ENCODE measurements at regions of chr22 and their contacts with region 1.

Region 1: GRCh38 chr22:23767673-23768548 is at the start of gene CHCHD10:
- DNase-seq: peak; percentile 89
- H3K4me3 ChIP-seq: peak within 1 kb of the TSS; percentile 99
- H3K27ac ChIP-seq: peak within 1 kb of the TSS; percentile 74
- H3K4me1 ChIP-seq: peaks cover 80% of the 10 kb centered on the region
- CTCF ChIP-seq: peak; percentile 86
- total RNA-seq, gene CHCHD10: 50.8 and 54.6 TPM in 2 replicates

Region 2: GRCh38 chr22:23716811-23717801 is 50.8 kb before region 1 on chr22:
- CTCF ChIA-PET with region 1: no interaction called
- POLR2A ChIA-PET with region 1: no interaction called
- intact Hi-C with region 1: loop called (anchors 1 kb)
- DNase-seq: peak; percentile 94
- H3K4me3 ChIP-seq: peak overlapping the region; percentile 79
- H3K27ac ChIP-seq: peak overlapping the region; percentile 38
- H3K4me1 ChIP-seq: peaks cover 15% of the 10 kb centered on the region
- CTCF ChIP-seq: no peak

Region 3: GRCh38 chr22:23800297-23801237 is 32.7 kb after region 1 on chr22:
- CTCF ChIA-PET with region 1: no interaction called
- POLR2A ChIA-PET with region 1: interaction called, 5 read pairs
- intact Hi-C with region 1: loop called (anchors 1 kb)
- DNase-seq: peak; percentile 97
- H3K4me3 ChIP-seq: peak overlapping the region; percentile 32
- H3K27ac ChIP-seq: peak overlapping the region; percentile 97
- H3K4me1 ChIP-seq: peaks cover 80% of the 10 kb centered on the region
- CTCF ChIP-seq: no peak

Region 4: GRCh38 chr22:23849009-23850006 is 81.4 kb after region 1 on chr22:
- CTCF ChIA-PET with region 1: interaction called, 7 read pairs
- POLR2A ChIA-PET with region 1: interaction called, 9 read pairs
- intact Hi-C with region 1: loop called (anchors 1 kb)
- DNase-seq: peak; percentile 86
- H3K4me3 ChIP-seq: peak overlapping the region; percentile 54
- H3K27ac ChIP-seq: peak overlapping the region; percentile 82
- H3K4me1 ChIP-seq: peaks cover 75% of the 10 kb centered on the region
- CTCF ChIP-seq: peak; percentile 90